Breast epithelium (tissue), 4 donors: ENCODE measurements at regions of chr2 and their contacts with region 1.

Region 1: DNA sequence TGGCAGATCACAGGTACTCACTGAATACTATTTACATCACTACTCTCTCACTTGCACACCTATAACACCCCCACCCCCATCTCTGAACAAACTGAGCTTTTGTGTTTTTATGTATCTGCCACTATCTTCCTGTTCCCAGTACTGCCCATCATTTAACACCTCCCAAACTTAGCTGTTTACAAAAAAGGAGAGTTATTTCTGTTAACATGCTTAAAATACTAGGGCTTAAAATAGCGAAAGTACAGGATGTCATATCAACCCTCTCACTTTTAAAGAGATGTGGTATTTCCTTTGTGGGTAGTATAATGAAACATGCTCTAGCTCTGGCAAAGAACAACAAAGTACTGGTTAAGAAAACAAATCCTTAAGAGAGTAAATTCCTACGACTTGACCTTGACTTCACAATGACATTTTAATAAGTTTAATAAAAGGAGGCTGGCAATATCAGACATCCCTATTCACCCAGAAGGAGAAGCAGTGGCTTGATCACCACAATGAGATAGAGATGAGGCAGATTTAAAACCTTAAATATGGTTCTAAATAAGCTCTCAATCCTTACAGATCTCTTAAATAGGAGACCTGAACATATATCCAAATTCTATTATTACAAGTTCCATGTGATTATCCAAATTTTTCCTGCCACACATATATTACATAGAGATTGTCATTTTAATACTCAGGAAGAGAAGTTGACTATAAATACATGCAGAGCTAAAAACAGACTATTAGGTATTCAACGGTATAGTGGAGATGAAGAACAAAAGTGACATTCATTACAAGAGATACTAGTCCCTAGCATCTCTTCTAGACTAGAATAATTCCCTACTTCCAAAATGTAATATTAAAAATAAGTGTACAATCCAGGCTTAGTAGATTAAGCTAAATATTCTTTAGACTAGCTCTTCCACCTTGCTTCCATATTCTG is 36.9 kb downstream of the TRAK2 start:
- DNase-seq: no peak
- H3K4me3 ChIP-seq: no peak overlapping the region
- H3K27ac ChIP-seq: peak overlapping the region; percentile 27 to 34
- H3K4me1 ChIP-seq: peaks cover 0 to 8% of the 10 kb centered on the region in 2 donors
- H3K27me3 ChIP-seq: no peaks in the 10 kb centered on the region
- CTCF ChIP-seq: no peak
- POLR2A ChIP-seq: no peak

Region 2: GRCh38 chr2:200747668-200748618 is 666.4 kb before region 1 on chr2:
- intact Hi-C with region 1: loop called (anchors 5 kb)
- DNase-seq: no peak
- H3K4me3 ChIP-seq: no peak overlapping the region
- H3K27ac ChIP-seq: peak overlapping the region; percentile 66 to 84
- H3K4me1 ChIP-seq: peaks cover 0 to 1% of the 10 kb centered on the region in 2 donors
- H3K27me3 ChIP-seq: no peaks in the 10 kb centered on the region
- CTCF ChIP-seq: no peak
- POLR2A ChIP-seq: no peak